MCF 10A (cell line): ENCODE measurements at regions of chr11 and their contacts with region 1.

Region 1: DNA sequence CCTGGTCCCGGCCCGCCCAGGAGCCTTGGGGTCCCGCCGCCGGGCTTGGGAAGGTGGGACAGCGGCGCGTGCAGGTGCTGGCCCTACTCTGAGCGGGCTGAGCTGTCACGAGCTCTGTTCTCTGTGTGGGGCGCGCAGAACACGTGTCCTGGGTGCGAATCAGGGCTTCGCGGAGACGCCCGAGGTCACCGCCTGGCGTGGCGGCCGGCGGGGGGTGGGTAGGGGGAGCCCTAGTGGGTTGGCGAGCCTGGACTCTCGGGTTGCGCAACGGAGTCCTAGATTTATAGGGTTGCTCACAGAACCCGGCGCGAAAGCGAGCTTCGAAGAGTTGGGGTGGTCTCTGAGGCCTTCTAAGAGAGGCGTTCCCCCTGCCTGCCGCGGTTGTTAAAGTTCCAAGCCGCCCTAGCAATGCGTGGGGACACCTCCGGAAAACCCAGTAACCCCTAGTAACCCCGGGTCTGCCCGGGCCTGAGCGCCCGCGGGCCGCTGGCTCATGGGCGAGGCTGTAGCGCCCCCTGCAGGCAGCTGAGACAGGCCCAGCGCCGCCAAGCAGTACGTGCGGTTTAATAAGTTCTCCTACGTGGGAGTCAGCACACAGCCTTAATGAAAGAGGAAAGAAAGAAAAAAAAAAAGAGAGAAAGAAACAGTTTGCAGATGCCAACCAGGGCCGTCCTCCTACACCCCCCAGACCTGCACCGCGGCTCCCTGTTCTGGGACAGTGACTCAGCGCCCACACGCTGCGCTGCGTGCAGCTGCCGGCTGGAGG is 2.8 kb downstream of the ADM start:
- DNase-seq: peak; percentile 87
- H3K4me3 Mint-ChIP-seq: peak overlapping the region; percentile 79
- H3K27ac Mint-ChIP-seq: peak overlapping the region; percentile 87
- H3K4me1 Mint-ChIP-seq: peaks cover 45% of the 10 kb centered on the region
- H3K27me3 Mint-ChIP-seq: no peaks in the 10 kb centered on the region
- CTCF ChIP-seq: peak; percentile 99

Region 2: DNA sequence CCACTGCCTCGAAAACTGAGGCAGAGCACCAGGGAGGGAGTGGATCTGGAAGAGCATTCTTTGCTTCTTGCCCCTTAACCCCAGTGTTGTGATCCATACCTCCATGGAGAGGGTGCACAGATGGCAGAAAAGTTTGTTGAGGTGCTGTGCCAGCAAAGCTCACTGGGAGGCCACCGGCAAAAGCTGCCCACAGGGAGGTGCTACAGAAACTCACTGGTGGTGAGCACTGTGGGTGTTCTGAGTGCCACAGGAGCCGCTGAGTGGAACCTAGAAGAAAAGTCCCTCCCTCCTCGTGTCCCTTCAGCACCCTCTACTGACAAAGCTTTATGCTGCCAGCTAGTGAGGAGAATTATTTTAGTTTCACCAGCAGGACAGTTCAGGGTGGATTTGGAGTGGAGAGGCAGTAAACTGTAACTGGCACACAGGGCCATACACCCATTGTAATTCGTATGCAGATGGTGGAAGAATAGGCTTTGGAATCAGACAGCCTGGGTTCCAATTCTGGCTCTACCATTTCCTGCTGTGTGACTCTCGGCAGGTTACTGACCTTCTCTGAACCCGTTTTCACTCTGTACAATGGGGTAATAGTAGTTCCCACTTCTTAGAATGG is 559.2 kb before region 1 on chr11:
- CTCF ChIA-PET with region 1: interaction called, 3 read pairs
- POLR2A ChIA-PET with region 1: interaction called, 46 read pairs
- intact Hi-C with region 1: no loop called
- DNase-seq: peak; percentile 75
- H3K4me3 Mint-ChIP-seq: no peak overlapping the region
- H3K27ac Mint-ChIP-seq: no peak overlapping the region
- H3K4me1 Mint-ChIP-seq: peaks cover 6% of the 10 kb centered on the region
- H3K27me3 Mint-ChIP-seq: no peaks in the 10 kb centered on the region
- CTCF ChIP-seq: peak; percentile 90

Region 3: GRCh38 chr11:9861860-9862725 is 445.5 kb before region 1 on chr11:
- CTCF ChIA-PET with region 1: interaction called, 6 read pairs
- POLR2A ChIA-PET with region 1: interaction called, 5 read pairs
- intact Hi-C with region 1: loop called (anchors 1 kb)
- DNase-seq: peak; percentile 80
- H3K4me3 Mint-ChIP-seq: no peak overlapping the region
- H3K27ac Mint-ChIP-seq: no peak overlapping the region
- H3K4me1 Mint-ChIP-seq: peaks cover 8% of the 10 kb centered on the region
- H3K27me3 Mint-ChIP-seq: no peaks in the 10 kb centered on the region
- CTCF ChIP-seq: peak; percentile 80

Region 4: GRCh38 chr11:10181811-10182210 is 125.8 kb before region 1 on chr11:
- CTCF ChIA-PET with region 1: interaction called, 26 read pairs
- POLR2A ChIA-PET with region 1: interaction called, 29 read pairs
- intact Hi-C with region 1: loop called (anchors 2 kb)
- DNase-seq: peak; percentile 30
- H3K4me3 Mint-ChIP-seq: no peak overlapping the region
- H3K27ac Mint-ChIP-seq: no peak overlapping the region
- H3K4me1 Mint-ChIP-seq: peaks cover 7% of the 10 kb centered on the region
- H3K27me3 Mint-ChIP-seq: no peaks in the 10 kb centered on the region
- CTCF ChIP-seq: peak; percentile 28

Region 5: GRCh38 chr11:10272132-10272531 is 35.5 kb before region 1 on chr11:
- CTCF ChIA-PET with region 1: interaction called, 3 read pairs
- POLR2A ChIA-PET with region 1: interaction called, 14 read pairs
- intact Hi-C with region 1: no loop called
- DNase-seq: peak; percentile 21
- H3K4me3 Mint-ChIP-seq: no peak overlapping the region
- H3K27ac Mint-ChIP-seq: no peak overlapping the region
- H3K4me1 Mint-ChIP-seq: peaks cover 22% of the 10 kb centered on the region
- H3K27me3 Mint-ChIP-seq: no peaks in the 10 kb centered on the region
- CTCF ChIP-seq: no peak

Region 6: GRCh38 chr11:10366568-10367370 is 59.1 kb after region 1 on chr11:
- CTCF ChIA-PET with region 1: interaction called, 3 read pairs
- POLR2A ChIA-PET with region 1: interaction called, 3 read pairs
- intact Hi-C with region 1: loop called (anchors 2 kb)
- DNase-seq: peak; percentile 89
- H3K4me3 Mint-ChIP-seq: no peak overlapping the region
- H3K27ac Mint-ChIP-seq: peak overlapping the region; percentile 72
- H3K4me1 Mint-ChIP-seq: peaks cover 10% of the 10 kb centered on the region
- H3K27me3 Mint-ChIP-seq: no peaks in the 10 kb centered on the region
- CTCF ChIP-seq: peak; percentile 78